Activated CD8-positive, alpha-beta memory T cell treated with anti-CD3 and anti-CD28 coated beads, Interleukin-2, amount 10 ng/mL, durations not matched to agents 7 days and 5 days (primary cell): ENCODE measurements at regions of chr16 and their contacts with region 1.

Region 1: GRCh38 chr16:75464130-75464918 is at the start of gene TMEM170A:
- DNase-seq: peak; percentile 99
- ATAC-seq: peak; percentile 96
- H3K4me3 Mint-ChIP-seq: peak within 1 kb of the TSS; percentile 90
- H3K27ac Mint-ChIP-seq: peak within 1 kb of the TSS; percentile 86
- H3K4me1 Mint-ChIP-seq: peaks cover 46% of the 10 kb centered on the region
- H3K27me3 Mint-ChIP-seq: no peaks in the 10 kb centered on the region
- total RNA-seq, gene TMEM170A: 31.1 to 33.7 TPM

Region 2: DNA sequence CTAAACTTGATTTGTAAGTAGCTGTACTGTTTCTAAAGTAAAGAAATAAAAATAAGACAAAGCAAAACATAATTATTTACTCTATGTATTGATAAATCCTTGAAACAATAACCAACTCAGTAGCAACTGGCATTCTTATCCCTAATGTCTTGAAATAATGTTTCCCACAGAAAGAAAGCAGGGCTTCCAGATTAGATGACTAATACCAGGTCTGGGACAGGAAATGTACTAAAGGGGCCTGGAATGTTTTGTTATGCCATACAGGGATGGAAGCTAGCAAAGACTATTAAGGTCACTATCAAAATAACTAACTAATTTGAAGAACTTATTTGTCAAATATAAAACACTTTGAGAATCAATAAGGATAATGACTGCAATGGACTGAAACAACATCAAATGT is 113.1 kb before region 1 on chr16:
- CTCF ChIA-PET with region 1: no interaction called
- DNase-seq: no peak
- ATAC-seq: no peak
- H3K4me3 Mint-ChIP-seq: no peak overlapping the region
- H3K27ac Mint-ChIP-seq: no peak overlapping the region
- H3K4me1 Mint-ChIP-seq: no peaks in the 10 kb centered on the region
- H3K27me3 Mint-ChIP-seq: no peaks in the 10 kb centered on the region

Region 3: DNA sequence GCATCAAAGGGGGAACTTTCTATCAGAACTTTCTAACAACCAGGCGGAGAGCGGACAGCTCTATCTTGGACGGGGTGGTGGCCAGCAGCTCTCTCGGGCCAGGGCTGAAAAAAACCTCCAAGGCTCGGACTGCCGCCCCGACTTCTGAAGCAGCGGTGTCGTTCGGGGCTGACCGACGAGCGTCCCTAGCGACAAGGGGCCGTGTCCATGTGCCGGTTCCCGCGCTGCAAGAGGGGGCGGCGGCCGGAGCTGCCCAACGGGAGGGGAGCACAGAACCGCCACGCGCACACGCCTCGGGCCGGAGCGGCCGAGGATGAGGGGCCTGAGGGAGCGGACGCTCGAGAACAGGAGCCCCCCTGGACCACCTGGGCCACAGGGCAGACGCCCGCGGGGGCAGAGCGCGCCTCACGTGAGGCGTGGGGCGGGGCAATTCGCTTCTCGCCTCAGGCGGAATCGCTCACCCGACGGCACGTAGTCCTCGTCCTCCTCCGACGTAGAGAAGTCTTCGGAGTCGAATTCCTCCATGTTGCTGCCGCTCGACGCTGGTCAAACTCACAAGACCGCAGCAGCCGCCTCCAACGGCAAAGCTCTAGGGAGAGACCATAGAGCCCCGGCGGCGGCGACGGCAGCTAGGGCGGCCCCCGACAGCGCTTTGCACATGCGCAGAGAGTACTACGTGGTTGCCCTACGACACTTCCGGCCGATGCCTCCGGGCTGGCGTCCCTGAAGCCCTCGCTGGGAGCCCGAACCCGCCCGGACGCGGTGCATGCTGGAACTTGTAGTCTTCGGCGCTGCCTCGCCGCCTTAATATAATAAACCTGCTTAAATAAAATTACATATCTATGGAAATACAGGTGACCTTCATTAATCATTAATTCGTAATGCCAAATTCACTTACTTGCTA is 31.2 kb before region 1 on chr16 and contains the start of gene CFDP1:
- CTCF ChIA-PET with region 1: interaction called, 45 read pairs
- DNase-seq: peak; percentile 97
- ATAC-seq: peak; percentile 94
- H3K4me3 Mint-ChIP-seq: peak within 1 kb of the TSS; percentile 81
- H3K27ac Mint-ChIP-seq: peak within 1 kb of the TSS; percentile 95
- H3K4me1 Mint-ChIP-seq: peaks cover 33% of the 10 kb centered on the region
- H3K27me3 Mint-ChIP-seq: no peaks in the 10 kb centered on the region
- total RNA-seq, gene CFDP1: 31.4 to 44.0 TPM

Region 4: GRCh38 chr16:75514296-75514695 is 50.0 kb after region 1 on chr16:
- CTCF ChIA-PET with region 1: interaction called, 24 read pairs
- DNase-seq: no peak
- ATAC-seq: no peak
- H3K4me3 Mint-ChIP-seq: no peak overlapping the region
- H3K27ac Mint-ChIP-seq: no peak overlapping the region
- H3K4me1 Mint-ChIP-seq: peaks cover 9% of the 10 kb centered on the region
- H3K27me3 Mint-ChIP-seq: peaks cover 4% of the 10 kb centered on the region

Region 5: DNA sequence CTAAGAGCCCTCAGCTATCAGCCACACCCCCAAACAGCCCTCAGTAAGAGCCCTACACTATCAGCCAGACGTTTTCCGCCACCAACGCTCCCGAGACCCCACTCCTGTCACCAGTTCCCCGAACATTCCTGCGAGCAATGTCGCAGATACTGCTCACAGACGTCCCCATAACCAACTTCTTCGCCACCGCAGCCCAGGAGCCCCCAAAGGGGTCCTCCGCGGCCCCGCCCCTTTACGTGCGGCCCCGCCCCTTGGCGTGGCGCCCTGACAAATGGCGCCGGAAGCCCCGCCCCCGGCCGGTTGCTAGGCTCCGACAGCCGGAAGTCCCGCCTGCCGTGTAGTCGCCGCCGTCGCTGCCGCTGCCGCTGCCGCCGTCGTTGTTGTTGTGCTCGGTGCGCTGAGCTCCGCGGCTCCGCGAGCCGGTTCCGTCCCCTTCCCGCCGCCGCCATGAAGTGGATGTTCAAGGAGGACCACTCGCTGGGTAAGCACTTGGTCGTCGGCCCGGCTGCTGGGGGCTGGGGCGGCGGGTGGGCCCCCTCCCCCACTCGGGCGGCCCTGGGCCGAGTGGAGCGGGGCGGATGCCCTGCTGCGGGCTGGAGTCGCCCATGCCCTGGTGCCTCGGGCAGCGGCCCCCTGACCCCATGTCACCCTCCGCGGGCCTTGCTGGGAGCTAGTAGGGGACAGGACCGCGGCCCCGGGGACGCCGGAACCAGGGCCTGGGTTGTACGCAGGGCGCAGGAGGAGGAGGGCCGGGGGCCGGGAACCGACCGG is 101.9 kb after region 1 on chr16 and contains the start of gene GABARAPL2:
- CTCF ChIA-PET with region 1: interaction called, 13 read pairs
- DNase-seq: peak; percentile 92
- ATAC-seq: peak; percentile 80
- H3K4me3 Mint-ChIP-seq: peak within 1 kb of the TSS; percentile 89
- H3K27ac Mint-ChIP-seq: peak within 1 kb of the TSS; percentile 92
- H3K4me1 Mint-ChIP-seq: peaks cover 38% of the 10 kb centered on the region
- H3K27me3 Mint-ChIP-seq: peaks cover 15% of the 10 kb centered on the region
- total RNA-seq, gene GABARAPL2: 59.9 to 70.8 TPM